BJ (cell line): ENCODE measurements at regions of chr1 and their contacts with region 1.

Region 1: DNA sequence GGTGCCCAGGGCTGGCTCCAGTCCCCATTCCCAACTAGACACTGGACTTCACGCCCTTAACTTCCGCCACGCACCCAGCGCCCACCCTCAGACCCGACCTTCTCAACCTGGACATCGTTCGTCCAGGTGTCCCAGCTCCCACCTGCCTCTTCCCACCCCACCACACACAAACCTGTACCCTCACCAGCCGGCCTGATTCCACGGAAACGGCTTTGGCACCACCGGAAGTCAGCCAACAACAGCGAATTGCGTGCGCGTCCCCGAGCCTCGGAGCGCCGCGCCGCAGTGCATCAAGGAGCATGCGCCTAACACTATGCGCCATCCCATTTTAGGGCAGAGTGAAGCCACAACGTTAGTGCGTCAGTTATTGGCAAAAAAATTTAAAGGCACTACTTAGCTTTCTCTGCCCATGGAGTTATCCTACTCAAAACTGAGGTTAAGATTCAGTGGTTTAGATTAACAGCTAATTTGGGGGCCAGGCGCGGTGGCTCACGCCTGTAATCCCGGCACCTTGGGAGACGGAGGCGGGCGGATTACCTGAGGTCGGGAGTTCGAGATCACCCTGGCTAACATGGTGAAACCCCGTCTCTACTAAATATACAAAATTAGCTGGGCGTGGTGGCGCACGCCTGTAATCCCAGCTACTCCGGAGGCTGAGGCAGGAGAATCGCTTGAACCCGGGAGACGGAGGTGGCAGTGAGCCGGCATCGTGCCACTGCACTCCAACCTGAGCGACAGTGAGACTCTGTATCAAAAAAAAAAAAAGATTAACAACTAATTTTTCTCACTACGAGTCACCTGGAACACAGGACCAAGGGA is at the start of gene GON4L:
- DNase-seq: peak; percentile 56
- H3K4me3 ChIP-seq: peak within 1 kb of the TSS; percentile 91
- H3K27me3 ChIP-seq: no peaks in the 10 kb centered on the region
- CTCF ChIP-seq: no peak
- polyA plus RNA-seq, gene GON4L: 17.9 and 18.3 TPM in 2 replicates

Region 2: DNA sequence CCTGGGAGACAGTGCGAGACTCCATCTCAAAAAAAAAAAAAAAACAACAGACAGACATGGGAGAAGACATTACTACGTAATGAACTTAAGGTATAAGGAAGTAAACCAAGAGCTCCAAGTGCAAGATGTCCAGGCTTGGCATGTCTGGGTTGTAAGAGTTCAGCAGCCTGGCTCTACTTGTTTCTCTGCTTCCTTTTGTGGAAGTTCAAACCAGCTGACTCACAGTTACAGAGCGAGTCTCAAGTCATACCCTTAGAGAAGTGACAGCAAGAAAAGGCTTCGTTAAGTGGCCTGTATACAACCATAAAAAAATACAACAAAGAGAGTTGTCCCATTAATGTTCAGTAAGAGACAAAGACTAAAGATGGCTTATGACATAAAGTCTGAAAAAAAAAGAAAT is 52.7 kb after region 1 on chr1:
- CTCF ChIA-PET with region 1: no interaction called
- POLR2A ChIA-PET with region 1: interaction called, 10 read pairs
- DNase-seq: no peak
- H3K4me3 ChIP-seq: peak overlapping the region; percentile 59
- H3K27me3 ChIP-seq: no peaks in the 10 kb centered on the region
- CTCF ChIP-seq: no peak